CD4-positive, alpha-beta T cell (primary cell): ENCODE measurements at regions of chr6 and their contacts with region 1.

Region 1: DNA sequence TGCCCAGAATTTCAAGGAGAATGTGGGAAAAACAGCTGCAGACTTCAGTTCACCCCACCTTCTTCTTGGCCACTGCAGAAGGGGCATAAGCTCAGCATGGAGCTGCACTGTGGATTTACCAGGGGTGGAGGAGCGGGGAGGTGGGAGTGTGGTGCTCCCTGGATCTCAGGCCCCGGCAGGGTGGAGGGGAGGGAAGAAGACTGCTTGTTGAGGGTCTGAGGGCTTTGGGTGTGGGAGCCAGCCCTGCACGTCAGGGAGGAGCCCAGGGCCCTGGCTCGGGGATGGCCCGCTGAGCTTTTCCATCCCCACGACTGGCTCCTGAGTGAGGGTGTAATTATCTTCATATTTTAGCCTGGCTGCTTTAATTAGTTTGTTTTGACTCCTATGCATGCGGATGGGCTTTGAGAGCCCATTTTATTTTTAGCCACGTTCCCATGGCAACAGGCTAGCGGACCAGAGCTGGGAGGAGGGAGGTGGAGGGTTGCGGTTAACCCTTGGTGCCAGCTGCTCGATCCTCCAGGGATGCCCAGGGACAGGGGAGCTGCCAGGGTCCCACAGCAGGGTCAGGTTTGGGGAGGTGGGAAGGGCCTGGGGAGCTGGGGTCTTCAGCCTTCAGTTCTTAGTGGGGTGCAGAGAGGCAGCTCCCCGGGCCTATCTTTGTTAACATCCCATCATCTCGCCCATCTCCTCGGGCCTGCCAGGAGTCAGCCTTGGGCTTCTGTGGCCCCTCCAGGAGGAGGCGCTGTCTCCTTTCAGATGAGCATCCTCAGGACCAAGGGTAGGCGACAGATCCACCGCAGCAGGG is 68.2 kb downstream of the RAB44 start:
- DNase-seq: peak; percentile 68 to 89 (median 76)
- ATAC-seq: peak; percentile 93
- H3K4me3 ChIP-seq: no peak overlapping the region
- H3K4me3 Mint-ChIP-seq: peak overlapping the region; percentile 18
- H3K27ac ChIP-seq: no peak overlapping the region
- H3K27ac Mint-ChIP-seq: peak overlapping the region; percentile 47
- H3K4me1 ChIP-seq: peaks cover 49% of the 10 kb centered on the region
- H3K4me1 Mint-ChIP-seq: peaks cover 34% of the 10 kb centered on the region
- H3K27me3 ChIP-seq: no peaks in the 10 kb centered on the region
- H3K27me3 Mint-ChIP-seq: no peaks in the 10 kb centered on the region
- CTCF ChIP-seq: peak; percentile 63

Region 2: GRCh38 chr6:36781669-36782068 is 15.9 kb after region 1 on chr6:
- CTCF ChIA-PET with region 1: interaction called, 15 read pairs
- POLR2A ChIA-PET with region 1: interaction called, 3 read pairs
- intact Hi-C with region 1: loop called (anchors 1 to 2 kb)
- DNase-seq: no peak
- ATAC-seq: no peak
- H3K4me3 ChIP-seq: no peak overlapping the region
- H3K4me3 Mint-ChIP-seq: no peak overlapping the region
- H3K27ac ChIP-seq: no peak overlapping the region
- H3K27ac Mint-ChIP-seq: no peak overlapping the region
- H3K4me1 ChIP-seq: peaks cover 10% of the 10 kb centered on the region
- H3K4me1 Mint-ChIP-seq: peaks cover 5% of the 10 kb centered on the region
- H3K27me3 ChIP-seq: peaks cover 0 to 4% of the 10 kb centered on the region in 2 experiments
- H3K27me3 Mint-ChIP-seq: no peaks in the 10 kb centered on the region
- CTCF ChIP-seq: no peak

Region 3: GRCh38 chr6:36851149-36851614 is 85.4 kb after region 1 on chr6:
- CTCF ChIA-PET with region 1: interaction called, 7 read pairs
- POLR2A ChIA-PET with region 1: no interaction called
- intact Hi-C with region 1: loop called (anchors 1 to 2 kb)
- DNase-seq: peak in 7 of 14 experiments; percentile 19 to 69 (median 33)
- ATAC-seq: peak; percentile 58
- H3K4me3 ChIP-seq: no peak overlapping the region
- H3K4me3 Mint-ChIP-seq: no peak overlapping the region
- H3K27ac ChIP-seq: no peak overlapping the region
- H3K27ac Mint-ChIP-seq: no peak overlapping the region
- H3K4me1 ChIP-seq: peaks cover 5% of the 10 kb centered on the region
- H3K4me1 Mint-ChIP-seq: no peaks in the 10 kb centered on the region
- H3K27me3 ChIP-seq: no peaks in the 10 kb centered on the region
- H3K27me3 Mint-ChIP-seq: no peaks in the 10 kb centered on the region
- CTCF ChIP-seq: peak; percentile 67

Region 4: DNA sequence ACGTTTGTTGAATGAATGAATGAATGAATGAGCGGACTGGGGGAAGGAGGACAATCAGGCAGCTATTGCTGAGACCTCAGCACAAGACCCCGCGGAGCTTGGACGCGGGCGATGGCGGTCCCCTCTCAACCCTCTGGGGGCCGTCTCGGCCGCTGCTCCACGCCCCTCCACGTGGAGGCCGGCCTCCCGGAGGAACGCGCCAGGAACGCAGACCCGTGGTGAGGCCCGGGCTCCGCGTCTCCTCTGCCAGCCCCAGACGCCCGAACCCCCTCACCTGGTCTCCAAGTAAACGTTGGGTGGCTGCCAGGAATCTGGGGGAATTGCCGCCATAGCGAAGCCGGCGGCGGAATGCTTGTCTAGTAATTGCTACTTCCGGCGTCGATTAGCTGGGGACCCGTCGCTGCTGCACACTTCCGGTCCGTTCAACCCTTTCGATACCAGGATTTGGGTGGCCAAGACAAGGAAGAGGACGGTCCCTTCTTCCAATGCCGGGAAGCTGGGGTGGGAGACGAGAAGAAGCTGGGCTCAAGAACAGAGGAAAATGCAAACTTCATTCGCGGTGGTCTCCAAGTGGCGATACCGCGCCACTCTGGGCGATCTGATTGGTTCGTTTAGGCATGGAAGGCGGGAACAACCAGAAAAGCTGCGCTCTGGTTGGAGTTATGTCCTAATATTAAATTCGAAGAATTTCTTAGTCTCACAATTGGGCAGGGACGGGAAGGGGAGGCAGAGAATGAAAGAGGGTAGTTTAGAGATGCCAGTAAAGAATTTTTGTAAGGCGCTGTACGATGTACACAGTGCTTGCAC is 108.8 kb after region 1 on chr6 and contains the start of gene PPIL1:
- CTCF ChIA-PET with region 1: interaction called, 3 read pairs
- POLR2A ChIA-PET with region 1: interaction called, 6 read pairs
- intact Hi-C with region 1: loop called in 1 of 2 experiments (anchors 1 kb)
- DNase-seq: peak; percentile 71 to 94 (median 82)
- ATAC-seq: peak; percentile 91
- H3K4me3 ChIP-seq: peak within 1 kb of the TSS; percentile 69
- H3K4me3 Mint-ChIP-seq: peak within 1 kb of the TSS; percentile 95
- H3K27ac ChIP-seq: peak within 1 kb of the TSS; percentile 80 to 82
- H3K27ac Mint-ChIP-seq: peak within 1 kb of the TSS; percentile 95
- H3K4me1 ChIP-seq: peaks cover 14% of the 10 kb centered on the region
- H3K4me1 Mint-ChIP-seq: peaks cover 45% of the 10 kb centered on the region
- H3K27me3 ChIP-seq: peaks cover 0 to 5% of the 10 kb centered on the region in 2 experiments
- H3K27me3 Mint-ChIP-seq: peaks cover 17% of the 10 kb centered on the region
- CTCF ChIP-seq: no peak
- total RNA-seq, gene PPIL1: 1.8 to 2.2 TPM

Region 5: DNA sequence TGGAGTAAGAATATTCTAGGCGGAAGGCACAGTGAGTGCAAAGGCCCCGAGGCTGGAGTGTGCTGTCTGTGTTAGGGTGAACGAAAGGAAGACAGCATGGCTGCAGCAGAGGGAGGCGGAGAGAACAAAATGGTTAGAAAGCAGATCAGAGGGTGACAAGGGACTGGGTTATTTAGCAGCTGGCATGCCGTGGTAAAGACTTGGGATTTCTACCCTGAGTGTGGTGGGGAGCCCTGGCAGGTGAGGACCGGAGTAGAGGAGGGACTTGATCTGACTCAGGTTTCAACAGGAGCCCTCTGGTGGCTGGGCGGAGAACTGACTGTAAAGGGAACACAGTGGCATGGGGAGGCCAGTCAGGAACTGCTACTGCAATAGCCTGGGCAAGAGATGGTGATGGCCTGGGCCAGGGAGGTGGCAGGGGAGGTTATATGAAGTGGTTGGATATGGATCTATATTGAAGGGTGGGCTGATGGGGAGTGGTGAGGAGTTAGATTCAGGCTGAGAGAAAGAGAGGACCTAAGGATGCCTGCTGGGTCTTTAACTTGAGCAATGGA is 442.2 kb after region 1 on chr6:
- CTCF ChIA-PET with region 1: no interaction called
- POLR2A ChIA-PET with region 1: no interaction called
- intact Hi-C with region 1: loop called (anchors 1 to 2 kb)
- DNase-seq: peak; percentile 83 to 93 (median 89)
- ATAC-seq: peak; percentile 73
- H3K4me3 ChIP-seq: no peak overlapping the region
- H3K4me3 Mint-ChIP-seq: peak overlapping the region; percentile 26
- H3K27ac ChIP-seq: no peak overlapping the region
- H3K27ac Mint-ChIP-seq: peak overlapping the region; percentile 58
- H3K4me1 ChIP-seq: peaks cover 56% of the 10 kb centered on the region
- H3K4me1 Mint-ChIP-seq: peaks cover 50% of the 10 kb centered on the region
- H3K27me3 ChIP-seq: no peaks in the 10 kb centered on the region
- H3K27me3 Mint-ChIP-seq: no peaks in the 10 kb centered on the region
- CTCF ChIP-seq: peak; percentile 86